T-cell (primary cell): ENCODE measurements at regions of chr15 and their contacts with region 1.

Region 1: DNA sequence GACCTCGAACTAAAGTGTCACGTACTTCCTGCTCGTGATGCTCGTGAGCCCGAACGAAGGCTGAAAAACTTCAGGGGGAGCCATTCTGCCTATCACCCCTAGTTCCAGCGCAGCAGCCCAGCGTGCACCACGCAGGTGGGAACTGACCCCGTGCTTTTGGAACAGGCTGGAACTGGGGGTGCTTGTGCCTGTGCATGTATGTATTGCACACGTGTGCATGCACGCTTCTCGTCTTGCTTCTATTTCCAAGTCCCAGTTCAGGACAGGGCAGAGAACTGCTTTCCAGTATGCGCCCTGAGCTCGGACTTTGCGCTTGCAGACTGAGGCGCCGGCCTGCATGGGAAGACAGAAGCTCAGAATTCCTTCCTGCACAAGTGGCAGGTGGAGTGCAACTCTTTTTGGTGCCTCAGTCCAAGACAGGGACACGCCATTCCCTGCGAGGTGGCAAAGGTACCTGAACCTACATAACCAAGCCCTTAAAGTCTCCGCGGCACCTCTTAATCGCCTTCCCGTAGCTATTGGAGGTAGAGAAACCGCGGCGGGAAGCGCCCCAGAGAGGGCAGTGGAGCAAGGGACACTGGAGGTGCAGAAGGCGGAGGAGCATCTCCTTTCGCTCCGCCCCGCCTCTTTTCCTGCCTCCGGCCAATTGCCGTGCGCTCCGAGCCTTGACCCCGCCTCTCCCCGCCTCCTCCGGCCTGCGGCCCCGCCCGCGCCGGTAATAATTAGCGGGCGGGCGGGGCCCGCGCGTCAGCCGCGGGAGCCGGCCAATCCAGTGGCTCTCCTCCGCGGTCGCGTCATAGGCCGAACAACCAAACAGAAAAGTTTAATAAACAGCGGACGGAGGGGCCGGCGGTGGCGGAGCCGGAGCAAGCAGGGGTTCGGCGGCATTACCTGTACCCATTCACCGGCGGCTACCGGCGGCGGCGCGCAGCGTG is at the start of gene ZFAND6:
- DNase-seq: peak; percentile 81 to 96 (median 91)
- ATAC-seq: peak; percentile 87 to 92 (median 88)
- H3K4me3 ChIP-seq: peak within 1 kb of the TSS; percentile 85 to 89
- H3K4me3 Mint-ChIP-seq: peak within 1 kb of the TSS; percentile 90 to 95 (median 91)
- H3K27ac ChIP-seq: peak within 1 kb of the TSS; percentile 74
- H3K27ac Mint-ChIP-seq: peak within 1 kb of the TSS; percentile 90
- H3K4me1 ChIP-seq: peaks cover 6 to 20% of the 10 kb centered on the region in 2 experiments
- H3K4me1 Mint-ChIP-seq: peaks cover 26 to 36% (median 31%) of the 10 kb centered on the region in 3 donors
- H3K27me3 ChIP-seq: no peaks in the 10 kb centered on the region
- H3K27me3 Mint-ChIP-seq: peaks cover 0 to 3% of the 10 kb centered on the region in 2 donors
- total RNA-seq, gene ZFAND6: 49.1 to 84.2 (median 57.1) TPM

Region 2: GRCh38 chr15:80072285-80072994 is 13.3 kb after region 1 on chr15:
- CTCF ChIA-PET with region 1: interaction called, 10 read pairs
- POLR2A ChIA-PET with region 1: interaction called, 6 to 7 read pairs
- DNase-seq: peak in 4 of 35 experiments; percentile 11 to 69 (median 16)
- ATAC-seq: peak; percentile 98 to 99 (median 98)
- H3K4me3 ChIP-seq: peak overlapping the region in 1 of 2 donors; percentile 27
- H3K4me3 Mint-ChIP-seq: peak overlapping the region; percentile 70 to 77 (median 76)
- H3K27ac ChIP-seq: peak overlapping the region; percentile 2
- H3K27ac Mint-ChIP-seq: peak overlapping the region; percentile 74 to 76
- H3K4me1 ChIP-seq: peaks cover 8 to 24% of the 10 kb centered on the region in 2 experiments
- H3K4me1 Mint-ChIP-seq: peaks cover 57 to 81% (median 79%) of the 10 kb centered on the region in 3 donors
- H3K27me3 ChIP-seq: no peaks in the 10 kb centered on the region
- H3K27me3 Mint-ChIP-seq: no peaks in the 10 kb centered on the region